ENCODE measurements at regions of chr20 and their contacts with region 1.

Region 1: DNA sequence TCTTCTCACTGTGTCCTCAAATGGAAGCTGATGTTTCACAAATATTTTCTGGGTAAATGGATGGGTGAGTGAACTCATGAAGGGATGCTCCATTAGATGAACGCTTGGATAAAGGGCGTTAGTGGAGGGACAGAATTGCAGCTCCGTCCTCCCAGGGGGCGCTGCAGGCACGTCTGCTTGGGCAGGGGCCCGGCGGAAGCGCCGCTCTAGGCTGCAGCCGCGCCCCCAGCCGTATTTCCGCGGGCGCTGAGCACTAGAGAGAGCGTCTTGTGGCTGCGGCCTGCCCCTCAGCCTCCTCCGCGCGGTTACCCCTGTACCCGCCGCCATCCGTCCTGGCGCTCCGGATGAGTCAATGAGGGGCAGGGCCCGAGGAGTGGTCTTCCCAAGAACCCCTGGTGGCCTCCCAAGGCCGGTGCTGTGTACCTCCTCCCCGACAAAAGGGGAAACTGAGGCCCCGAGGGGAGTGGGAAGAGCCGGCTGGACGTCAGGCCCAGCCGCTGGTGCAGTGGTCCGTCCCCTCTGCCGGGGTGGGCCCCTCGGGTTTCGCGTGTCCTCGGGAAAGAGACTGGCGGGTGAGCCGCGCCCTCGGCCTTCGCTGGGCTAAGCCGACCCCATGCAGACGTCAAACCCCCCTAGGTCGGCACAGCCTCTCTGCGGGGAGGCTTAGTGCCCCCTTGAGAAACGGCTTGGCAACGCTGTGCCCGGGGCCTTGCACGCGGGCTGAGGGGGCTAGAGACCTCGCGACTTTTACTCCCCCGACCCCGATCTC is 11.5 kb upstream of the SNHG17 start:
- DNase-seq: peak; percentile 96
- ATAC-seq: peak; percentile 95

Region 2: GRCh38 chr20:37956084-37956483 is 490.5 kb before region 1 on chr20:
- intact Hi-C with region 1: no loop called
- DNase-seq: no peak
- ATAC-seq: no peak

Region 3: GRCh38 chr20:38434743-38435554 is 11.7 kb before region 1 on chr20 and contains the start of gene SNHG17:
- intact Hi-C with region 1: loop called (anchors 1 kb)
- DNase-seq: peak; percentile 95
- ATAC-seq: peak; percentile 89
- total RNA-seq, gene SNHG17: 5.0 TPM

Region 4: GRCh38 chr20:38617011-38617829 is 170.6 kb after region 1 on chr20:
- intact Hi-C with region 1: no loop called
- DNase-seq: no peak
- ATAC-seq: no peak

Measured in left ventricle myocardium superior (tissue), 1 donor.